ENCODE measurements at regions of chr5 and their contacts with region 1.

Region 1: DNA sequence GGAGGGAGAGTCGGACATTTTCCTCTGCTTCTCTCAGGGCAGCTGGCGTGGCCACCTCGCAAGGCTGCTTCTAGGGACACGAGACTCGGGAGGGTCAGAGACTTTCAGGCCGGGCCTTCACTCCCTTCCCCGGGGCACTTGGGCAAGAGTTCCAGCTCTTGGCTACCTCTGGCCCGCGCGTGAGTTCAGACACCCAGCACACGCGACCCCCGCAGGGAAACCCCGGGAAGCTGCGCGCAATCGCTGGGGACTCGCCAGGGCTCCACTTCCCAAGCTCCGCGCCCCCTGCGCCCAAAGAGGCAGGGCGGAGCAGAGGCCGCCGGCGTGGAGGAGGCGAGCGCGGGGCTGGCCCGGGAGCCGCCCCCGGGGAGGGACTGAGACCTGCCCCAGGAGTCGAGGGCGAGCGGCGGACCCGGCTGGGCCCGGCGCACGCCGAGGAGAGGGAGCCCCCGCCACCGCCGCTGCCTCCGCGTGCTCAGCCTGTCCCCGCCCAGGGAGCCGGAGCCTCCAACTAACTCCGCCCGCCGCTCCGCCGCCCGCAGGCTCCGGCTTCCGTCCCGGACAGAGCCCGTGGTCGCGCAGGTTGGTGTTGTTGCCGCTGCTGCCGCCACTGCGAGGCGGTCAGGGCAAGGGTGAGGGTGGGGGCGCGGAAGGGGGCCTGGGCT is at the start of gene PAM:
- DNase-seq: peak; percentile 63 to 80 (median 66)
- H3K4me3 ChIP-seq: peak within 1 kb of the TSS; percentile 83
- H3K4me3 Mint-ChIP-seq: peak within 1 kb of the TSS; percentile 87 to 99 (median 98)
- H3K27ac ChIP-seq: peak within 1 kb of the TSS; percentile 78
- H3K27ac Mint-ChIP-seq: peak within 1 kb of the TSS; percentile 84 to 98 (median 96)
- H3K4me1 ChIP-seq: peaks cover 17% of the 10 kb centered on the region
- H3K4me1 Mint-ChIP-seq: peaks cover 43 to 55% (median 44%) of the 10 kb centered on the region in 3 donors
- H3K27me3 ChIP-seq: no peaks in the 10 kb centered on the region
- H3K27me3 Mint-ChIP-seq: peaks cover 0 to 5% of the 10 kb centered on the region in 2 donors
- total RNA-seq, gene PAM: 59.8 to 65.0 TPM

Region 2: GRCh38 chr5:102681407-102681983 is 73.4 kb before region 1 on chr5:
- CTCF ChIA-PET with region 1: no interaction called
- POLR2A ChIA-PET with region 1: no interaction called
- DNase-seq: peak; percentile 3 to 63 (median 32)
- H3K4me3 ChIP-seq: no peak overlapping the region
- H3K4me3 Mint-ChIP-seq: no peak overlapping the region
- H3K27ac ChIP-seq: no peak overlapping the region
- H3K27ac Mint-ChIP-seq: no peak overlapping the region
- H3K4me1 ChIP-seq: no peaks in the 10 kb centered on the region
- H3K4me1 Mint-ChIP-seq: no peaks in the 10 kb centered on the region
- H3K27me3 ChIP-seq: no peaks in the 10 kb centered on the region
- H3K27me3 Mint-ChIP-seq: peaks cover 0 to 3% of the 10 kb centered on the region in 2 donors

Region 3: GRCh38 chr5:102740515-102740914 is 14.4 kb before region 1 on chr5:
- CTCF ChIA-PET with region 1: no interaction called
- POLR2A ChIA-PET with region 1: interaction called, 14 read pairs
- DNase-seq: no peak
- H3K4me3 ChIP-seq: no peak overlapping the region
- H3K4me3 Mint-ChIP-seq: no peak overlapping the region
- H3K27ac ChIP-seq: no peak overlapping the region
- H3K27ac Mint-ChIP-seq: no peak overlapping the region
- H3K4me1 ChIP-seq: no peaks in the 10 kb centered on the region
- H3K4me1 Mint-ChIP-seq: no peaks in the 10 kb centered on the region
- H3K27me3 ChIP-seq: no peaks in the 10 kb centered on the region
- H3K27me3 Mint-ChIP-seq: peaks cover 3 to 13% of the 10 kb centered on the region in 2 donors

Region 4: DNA sequence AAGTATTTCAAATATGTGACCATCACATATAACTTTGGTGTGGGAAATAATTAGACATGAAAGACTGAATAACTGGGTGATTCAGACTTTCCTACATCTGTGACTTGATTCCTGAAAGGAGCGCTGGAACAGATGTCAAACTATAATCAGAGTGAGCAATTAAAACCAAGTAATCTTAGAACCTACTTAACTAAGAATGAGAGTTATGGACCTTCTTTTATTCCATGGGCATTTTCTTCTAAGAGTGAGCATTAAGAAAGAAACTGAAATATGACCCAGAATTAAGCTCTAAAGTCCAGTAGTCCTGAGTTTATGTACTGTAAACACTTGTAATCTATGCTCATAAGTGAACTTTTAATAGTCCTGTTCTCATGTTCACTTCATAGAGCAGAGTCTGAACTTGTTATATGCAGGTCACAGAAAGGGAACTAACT is 68.6 kb after region 1 on chr5:
- CTCF ChIA-PET with region 1: no interaction called
- POLR2A ChIA-PET with region 1: no interaction called
- DNase-seq: no peak
- H3K4me3 ChIP-seq: no peak overlapping the region
- H3K4me3 Mint-ChIP-seq: no peak overlapping the region
- H3K27ac ChIP-seq: no peak overlapping the region
- H3K27ac Mint-ChIP-seq: no peak overlapping the region
- H3K4me1 ChIP-seq: no peaks in the 10 kb centered on the region
- H3K4me1 Mint-ChIP-seq: peaks cover 14 to 34% (median 29%) of the 10 kb centered on the region in 3 donors
- H3K27me3 ChIP-seq: no peaks in the 10 kb centered on the region
- H3K27me3 Mint-ChIP-seq: no peaks in the 10 kb centered on the region

Measured in CD8-positive, alpha-beta memory T cell (primary cell).